Common myeloid progenitor, CD34-positive (primary cell): ENCODE measurements at regions of chr6 and their contacts with region 1.

Region 1: GRCh38 chr6:26012061-26012460 is 49.5 kb downstream of the TRIM38 start:
- DNase-seq: no peak
- H3K4me3 ChIP-seq: no peak overlapping the region
- H3K27ac ChIP-seq: no peak overlapping the region
- H3K4me1 ChIP-seq: peaks cover under 1 to 3% (median 2%) of the 10 kb centered on the region in 4 experiments
- H3K27me3 ChIP-seq: no peaks in the 10 kb centered on the region

Region 2: GRCh38 chr6:25732468-25733198 is 279.4 kb before region 1 on chr6:
- CTCF ChIA-PET with region 1: no interaction called
- POLR2A ChIA-PET with region 1: no interaction called
- DNase-seq: no peak
- H3K4me3 ChIP-seq: no peak overlapping the region
- H3K27ac ChIP-seq: no peak overlapping the region
- H3K4me1 ChIP-seq: no peaks in the 10 kb centered on the region
- H3K27me3 ChIP-seq: peaks cover 4 to 26% (median 10%) of the 10 kb centered on the region in 5 experiments

Region 3: DNA sequence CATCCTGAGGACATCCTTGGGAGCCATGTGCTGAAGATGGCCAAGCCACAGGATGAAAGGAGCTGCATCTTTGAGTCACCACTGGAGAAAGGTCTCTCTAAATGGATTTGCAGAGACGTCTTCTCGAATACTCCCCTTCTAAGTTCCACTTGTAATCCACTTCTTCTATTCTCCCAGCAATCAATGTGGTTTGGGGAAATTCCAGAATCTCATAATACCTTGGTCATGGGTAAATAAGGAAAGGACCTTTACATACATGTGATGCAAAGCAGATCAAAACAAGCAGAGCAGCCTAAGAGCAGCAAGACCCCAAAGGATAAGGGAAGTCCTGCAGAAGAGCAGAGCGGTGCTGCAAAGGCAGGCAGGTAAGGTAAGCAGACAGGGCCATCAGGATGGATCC is 14.1 kb before region 1 on chr6:
- CTCF ChIA-PET with region 1: interaction called, 264 read pairs
- POLR2A ChIA-PET with region 1: no interaction called
- DNase-seq: peak in 1 of 3 donors; percentile 25
- H3K4me3 ChIP-seq: no peak overlapping the region
- H3K27ac ChIP-seq: no peak overlapping the region
- H3K4me1 ChIP-seq: peaks cover 3 to 21% (median 11%) of the 10 kb centered on the region in 4 experiments
- H3K27me3 ChIP-seq: no peaks in the 10 kb centered on the region